Caco-2 (cell line): ENCODE measurements at regions of chr1 and their contacts with region 1.

Region 1: GRCh38 chr1:222465211-222466041 is 82.5 kb downstream of the HHIPL2 start:
- DNase-seq: peak; percentile 92 to 96
- H3K4me3 ChIP-seq: peak overlapping the region; percentile 36
- H3K4me3 Mint-ChIP-seq: peak overlapping the region; percentile 87
- H3K27ac Mint-ChIP-seq: peak overlapping the region; percentile 97
- H3K4me1 ChIP-seq: no peaks in the 10 kb centered on the region
- H3K4me1 Mint-ChIP-seq: peaks cover 11% of the 10 kb centered on the region
- H3K27me3 ChIP-seq: no peaks in the 10 kb centered on the region; the same call in 1 of the 2 replicates
- H3K27me3 Mint-ChIP-seq: peaks cover 4% of the 10 kb centered on the region
- CTCF ChIP-seq: peak; percentile 91 to 97

Region 2: DNA sequence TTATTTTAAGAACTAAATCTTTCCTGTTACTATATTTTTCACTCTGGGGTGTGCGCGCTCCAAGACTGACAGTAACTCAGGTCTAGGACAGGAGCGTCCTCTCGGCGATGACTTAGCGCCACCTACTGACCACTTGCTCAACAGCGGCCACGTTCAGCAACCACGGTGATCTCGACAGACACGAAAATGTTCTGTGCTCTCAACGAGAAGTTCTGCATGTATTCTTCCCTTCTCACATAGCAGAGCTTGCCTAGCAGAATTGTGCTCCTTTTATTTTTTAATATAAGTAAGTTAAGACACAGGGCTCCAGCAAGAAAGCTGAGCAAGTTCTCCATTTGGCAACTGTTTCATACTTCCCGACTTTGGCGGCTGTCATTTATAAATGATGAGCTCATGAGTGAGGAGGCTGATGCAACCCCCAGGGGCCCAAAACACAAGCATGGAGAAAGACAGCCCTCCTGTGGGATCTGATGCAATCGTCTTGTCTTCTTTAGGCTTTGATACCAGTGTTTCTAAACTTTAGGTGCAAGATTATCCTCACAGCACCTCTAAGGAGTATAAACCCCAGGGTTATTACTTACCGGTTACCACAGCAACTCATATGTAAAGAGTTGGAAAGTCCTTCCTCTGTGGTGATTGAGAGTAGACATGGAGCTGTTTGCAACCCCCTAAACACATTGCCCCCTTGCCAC is 10.1 kb before region 1 on chr1:
- CTCF ChIA-PET with region 1: interaction called, 11 read pairs
- POLR2A ChIA-PET with region 1: no interaction called
- intact Hi-C with region 1: no loop called
- DNase-seq: peak; percentile 75 to 81
- H3K4me3 ChIP-seq: no peak overlapping the region
- H3K4me3 Mint-ChIP-seq: peak overlapping the region; percentile 4
- H3K27ac Mint-ChIP-seq: no peak overlapping the region
- H3K4me1 ChIP-seq: no peaks in the 10 kb centered on the region
- H3K4me1 Mint-ChIP-seq: no peaks in the 10 kb centered on the region
- H3K27me3 ChIP-seq: no peaks in the 10 kb centered on the region
- H3K27me3 Mint-ChIP-seq: peaks cover 6% of the 10 kb centered on the region
- CTCF ChIP-seq: peak; percentile 81 to 90

Region 3: DNA sequence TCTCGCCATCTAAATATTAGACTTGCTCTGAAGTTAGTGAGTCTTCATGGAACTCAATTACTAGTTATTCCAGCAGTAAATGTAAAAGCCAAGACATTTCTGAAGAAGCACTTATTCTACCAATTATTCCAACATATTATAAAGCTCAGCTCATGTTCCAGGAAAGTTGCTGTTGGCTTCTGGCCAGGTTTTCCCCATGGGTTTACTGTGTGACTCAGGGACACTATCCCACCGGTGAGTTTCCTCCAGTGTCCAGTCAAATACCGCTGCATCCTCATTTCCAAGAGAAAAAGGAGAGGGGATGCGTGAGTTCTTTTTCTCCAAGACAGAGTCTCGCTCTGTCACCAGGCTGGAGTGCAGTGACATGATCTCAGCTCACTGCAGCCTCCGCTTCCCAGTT is 91.7 kb after region 1 on chr1:
- CTCF ChIA-PET with region 1: interaction called, 3 read pairs
- POLR2A ChIA-PET with region 1: no interaction called
- intact Hi-C with region 1: loop called (anchors 2 kb)
- DNase-seq: no peak
- H3K4me3 ChIP-seq: no peak overlapping the region
- H3K4me3 Mint-ChIP-seq: no peak overlapping the region
- H3K27ac Mint-ChIP-seq: no peak overlapping the region
- H3K4me1 ChIP-seq: no peaks in the 10 kb centered on the region
- H3K4me1 Mint-ChIP-seq: no peaks in the 10 kb centered on the region
- H3K27me3 ChIP-seq: no peaks in the 10 kb centered on the region
- H3K27me3 Mint-ChIP-seq: no peaks in the 10 kb centered on the region
- CTCF ChIP-seq: no peak

Region 4: GRCh38 chr1:222617367-222617951 is 152.0 kb after region 1 on chr1:
- CTCF ChIA-PET with region 1: no interaction called
- POLR2A ChIA-PET with region 1: no interaction called
- intact Hi-C with region 1: loop called (anchors 1 kb)
- DNase-seq: peak; percentile 90 to 94
- H3K4me3 ChIP-seq: peak overlapping the region; percentile 44
- H3K4me3 Mint-ChIP-seq: peak overlapping the region; percentile 85
- H3K27ac Mint-ChIP-seq: peak overlapping the region; percentile 78
- H3K4me1 ChIP-seq: 0 out of 2 replicates have a peak, but pooled peaks cover 6% of the 10 kb centered on the region
- H3K4me1 Mint-ChIP-seq: peaks cover 6% of the 10 kb centered on the region
- H3K27me3 ChIP-seq: no peaks in the 10 kb centered on the region
- H3K27me3 Mint-ChIP-seq: peaks cover 16% of the 10 kb centered on the region
- CTCF ChIP-seq: no peak

Region 5: GRCh38 chr1:222643938-222644635 is 178.7 kb after region 1 on chr1:
- CTCF ChIA-PET with region 1: no interaction called
- POLR2A ChIA-PET with region 1: no interaction called
- intact Hi-C with region 1: loop called (anchors 1 kb)
- DNase-seq: peak; percentile 99
- H3K4me3 ChIP-seq: peak overlapping the region; percentile 65
- H3K4me3 Mint-ChIP-seq: peak overlapping the region; percentile 79
- H3K27ac Mint-ChIP-seq: peak overlapping the region; percentile 92
- H3K4me1 ChIP-seq: 0 out of 2 replicates have a peak, but pooled peaks cover 5% of the 10 kb centered on the region
- H3K4me1 Mint-ChIP-seq: no peaks in the 10 kb centered on the region
- H3K27me3 ChIP-seq: no peaks in the 10 kb centered on the region
- H3K27me3 Mint-ChIP-seq: no peaks in the 10 kb centered on the region
- CTCF ChIP-seq: no peak